ENCODE measurements at regions of chr3 and their contacts with region 1.

Region 1: GRCh38 chr3:170908235-170909116 is at the start of gene EIF5A2:
- DNase-seq: peak; percentile 33
- ATAC-seq: peak; percentile 95
- H3K4me3 ChIP-seq: peak within 1 kb of the TSS; percentile 80
- H3K27ac ChIP-seq: no peak within 1 kb of the TSS
- H3K4me1 ChIP-seq: no peaks in the 10 kb centered on the region; the same call in 1 of the 2 replicates
- H3K27me3 ChIP-seq: 0 out of 4 replicates have a peak, but pooled peaks cover 0 to 3% of the 10 kb centered on the region in 2 experiments
- CTCF ChIP-seq: no peak
- EP300 ChIP-seq: no peak
- POLR2A ChIP-seq: peak; percentile 59
- RAD21 ChIP-seq: no peak
- polyA plus RNA-seq, gene EIF5A2: 2.2 to 2.8 TPM

Region 2: DNA sequence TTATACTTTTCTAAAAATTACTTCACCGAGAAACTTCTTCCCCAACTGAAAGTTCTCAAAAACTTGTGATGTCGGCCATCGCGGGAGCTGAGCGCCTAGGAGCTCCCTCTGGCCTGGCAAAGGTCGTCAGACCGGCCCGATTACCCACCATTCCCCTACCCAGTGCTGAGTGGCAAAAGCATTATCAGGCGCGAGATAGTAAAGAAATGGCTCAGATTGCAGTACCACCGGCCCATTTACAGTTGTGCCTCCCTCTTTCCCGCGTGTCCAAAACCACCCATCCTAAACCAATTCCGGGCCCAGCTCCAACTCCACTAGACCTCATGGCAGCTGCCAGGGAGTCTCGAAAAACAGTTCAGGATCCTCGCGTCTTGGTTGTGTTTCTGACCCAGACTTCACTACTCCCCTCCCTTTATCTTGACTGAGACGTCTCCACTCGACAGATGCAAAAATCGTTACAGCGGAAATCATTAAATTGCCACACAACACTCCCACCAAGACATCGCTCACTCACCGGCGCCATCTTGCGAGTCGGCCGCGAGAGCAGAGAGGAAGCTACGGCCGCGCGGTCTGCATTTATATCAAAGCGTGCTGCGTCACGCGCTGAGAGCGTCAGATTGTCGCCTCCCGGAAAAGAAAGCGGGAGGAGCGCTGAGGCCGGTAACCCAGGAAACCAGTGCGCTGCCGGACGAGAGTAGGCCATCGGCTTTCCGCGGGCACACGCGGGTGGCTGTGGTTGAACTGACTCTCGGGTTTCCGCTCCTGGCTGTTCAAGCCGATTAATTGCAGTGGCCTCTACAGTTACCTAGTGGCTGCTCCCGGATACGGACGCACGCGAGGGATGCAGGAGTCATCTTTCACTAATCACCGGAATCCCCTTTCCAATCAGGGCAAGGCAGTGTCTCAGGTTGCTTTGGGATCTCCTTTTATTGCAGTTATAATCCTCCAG is 38.6 kb before region 1 on chr3 and contains the start of gene RPL22L1:
- CTCF ChIA-PET with region 1: no interaction called
- POLR2A ChIA-PET with region 1: no interaction called
- RAD21 ChIA-PET with region 1: no interaction called
- SMC1A ChIA-PET with region 1: no interaction called
- in situ Hi-C with region 1: no loop called
- intact Hi-C with region 1: loop called (anchors 5 kb)
- DNase-seq: peak; percentile 91
- ATAC-seq: peak; percentile 95
- H3K4me3 ChIP-seq: peak within 1 kb of the TSS; percentile 87
- H3K27ac ChIP-seq: peak within 1 kb of the TSS; percentile 96
- H3K4me1 ChIP-seq: no peaks in the 10 kb centered on the region; the same call in 1 of the 2 replicates
- H3K27me3 ChIP-seq: no peaks in the 10 kb centered on the region
- CTCF ChIP-seq: peak in 2 of 3 experiments; percentile 5 to 18; a peak in 1 of 6 replicates
- EP300 ChIP-seq: peak in 1 of 2 experiments; percentile 14; a peak in 1 of 4 replicates
- POLR2A ChIP-seq: peak; percentile 100
- RAD21 ChIP-seq: no peak
- polyA plus RNA-seq, gene RPL22L1: 690 to 803 TPM

Region 3: DNA sequence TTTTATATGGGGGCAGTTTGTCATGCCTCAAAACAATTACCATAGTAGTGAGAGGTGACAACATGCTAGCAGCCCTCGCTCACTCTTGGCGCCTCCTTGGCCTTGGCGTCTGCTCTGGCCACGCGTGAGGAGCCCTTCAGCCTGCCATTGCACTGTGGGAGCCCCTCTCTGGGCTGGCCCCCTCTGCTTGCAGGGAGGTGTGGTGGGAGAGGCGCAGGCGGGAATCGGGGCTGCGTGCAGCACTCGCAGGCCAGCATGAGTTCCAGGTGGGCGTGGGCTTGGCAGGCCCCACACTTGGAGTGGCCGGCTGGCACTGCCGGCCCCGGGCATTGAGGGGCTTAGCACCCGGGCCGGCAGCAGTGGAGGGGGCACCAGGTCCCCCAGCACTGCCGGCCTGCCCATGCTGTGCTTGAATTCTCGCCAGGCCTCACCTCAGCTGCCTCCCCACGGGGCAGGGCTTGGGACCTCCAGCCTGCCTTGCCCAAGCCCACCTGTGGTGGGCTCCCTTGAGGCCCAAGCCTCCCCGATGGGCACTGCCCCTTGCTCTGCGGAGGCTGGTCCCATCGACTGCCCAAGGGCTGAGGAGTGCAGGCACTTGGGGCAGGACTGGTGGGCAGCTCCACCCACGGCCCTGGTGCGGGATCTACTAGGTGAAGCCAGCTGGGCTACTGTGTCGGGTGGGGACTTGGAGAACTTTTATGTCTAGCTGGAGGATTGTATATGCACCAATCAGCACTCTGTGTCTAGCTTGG is 38.7 kb after region 1 on chr3:
- CTCF ChIA-PET with region 1: no interaction called
- POLR2A ChIA-PET with region 1: no interaction called
- RAD21 ChIA-PET with region 1: no interaction called
- SMC1A ChIA-PET with region 1: no interaction called
- in situ Hi-C with region 1: no loop called
- intact Hi-C with region 1: no loop called
- DNase-seq: no peak
- ATAC-seq: no peak
- H3K4me3 ChIP-seq: no peak overlapping the region
- H3K27ac ChIP-seq: no peak overlapping the region
- H3K4me1 ChIP-seq: no peaks in the 10 kb centered on the region
- H3K27me3 ChIP-seq: no peaks in the 10 kb centered on the region
- CTCF ChIP-seq: no peak
- EP300 ChIP-seq: no peak
- POLR2A ChIP-seq: no peak
- RAD21 ChIP-seq: no peak

Region 4: GRCh38 chr3:170961616-170962400 is 53.3 kb after region 1 on chr3:
- CTCF ChIA-PET with region 1: no interaction called
- POLR2A ChIA-PET with region 1: no interaction called
- RAD21 ChIA-PET with region 1: no interaction called
- SMC1A ChIA-PET with region 1: no interaction called
- in situ Hi-C with region 1: no loop called
- intact Hi-C with region 1: no loop called
- DNase-seq: no peak
- ATAC-seq: 0 out of 3 replicates have a peak, but pooled peaks have one; percentile 30
- H3K4me3 ChIP-seq: no peak overlapping the region
- H3K27ac ChIP-seq: no peak overlapping the region
- H3K4me1 ChIP-seq: no peaks in the 10 kb centered on the region
- H3K27me3 ChIP-seq: no peaks in the 10 kb centered on the region; a peak in 1 of 4 replicates
- CTCF ChIP-seq: peak; percentile 31 to 64 (median 43); a peak in 5 of 6 replicates
- EP300 ChIP-seq: no peak
- POLR2A ChIP-seq: no peak
- RAD21 ChIP-seq: peak; percentile 73